HepG2 (cell line): ENCODE measurements at regions of chr20 and their contacts with region 1.

Region 1: DNA sequence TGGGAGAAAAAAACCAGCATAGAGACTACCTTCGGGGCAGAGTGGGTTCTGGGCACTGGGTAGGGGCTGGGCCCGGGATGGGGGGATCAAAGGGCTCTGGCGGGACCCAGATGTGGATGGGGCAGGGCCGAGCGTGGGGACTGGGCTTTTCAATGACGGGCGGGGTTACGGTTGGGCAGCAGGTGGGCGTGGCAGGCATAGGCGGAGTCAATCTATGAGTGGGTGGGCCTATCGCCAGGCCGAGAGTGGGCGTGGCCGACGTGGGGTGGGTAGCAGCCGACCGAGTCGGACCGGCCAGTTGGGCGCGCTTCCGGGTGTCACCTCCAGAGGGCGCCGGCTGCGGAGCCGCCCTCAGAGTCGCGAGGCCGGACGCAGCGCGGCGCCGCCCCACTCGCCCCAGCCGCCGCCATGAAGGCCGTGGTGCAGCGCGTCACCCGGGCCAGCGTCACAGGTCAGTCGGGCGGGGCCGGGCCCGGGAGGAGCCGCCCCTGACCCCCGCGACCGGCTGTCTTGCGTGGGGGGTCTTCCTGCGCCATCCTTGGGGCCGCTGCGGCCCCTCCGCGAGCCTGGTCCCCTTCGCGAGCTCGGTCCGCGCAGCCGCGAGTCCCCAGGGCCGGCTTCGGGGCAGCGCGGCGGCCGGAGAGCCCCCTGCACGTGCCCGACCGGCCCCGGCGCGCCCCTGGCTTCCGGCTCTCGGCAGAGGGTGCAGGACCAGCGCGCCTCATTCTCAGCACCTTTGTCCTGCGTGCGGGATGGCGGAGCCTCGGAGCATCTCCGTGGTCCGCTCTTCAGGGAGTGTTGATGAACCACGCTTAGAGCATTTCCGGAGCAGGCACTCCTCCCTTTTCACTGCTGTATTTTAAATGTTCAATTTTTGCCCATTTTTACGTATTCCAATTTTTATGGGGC is at the start of gene DTD1:
- DNase-seq: peak; percentile 84
- ATAC-seq: peak; percentile 90
- H3K4me3 ChIP-seq: peak within 1 kb of the TSS; percentile 67 to 80 (median 80)
- H3K27ac ChIP-seq: peak within 1 kb of the TSS; percentile 36
- H3K4me1 ChIP-seq: peaks cover 50% of the 10 kb centered on the region
- H3K27me3 ChIP-seq: no peaks in the 10 kb centered on the region
- CTCF ChIP-seq: peak; percentile 88
- EP300 ChIP-seq: no peak
- POLR2A ChIP-seq: peak; percentile 62 to 76
- RAD21 ChIP-seq: peak; percentile 88
- total RNA-seq, gene DTD1: 79.3 and 85.5 TPM in 2 replicates

Region 2: DNA sequence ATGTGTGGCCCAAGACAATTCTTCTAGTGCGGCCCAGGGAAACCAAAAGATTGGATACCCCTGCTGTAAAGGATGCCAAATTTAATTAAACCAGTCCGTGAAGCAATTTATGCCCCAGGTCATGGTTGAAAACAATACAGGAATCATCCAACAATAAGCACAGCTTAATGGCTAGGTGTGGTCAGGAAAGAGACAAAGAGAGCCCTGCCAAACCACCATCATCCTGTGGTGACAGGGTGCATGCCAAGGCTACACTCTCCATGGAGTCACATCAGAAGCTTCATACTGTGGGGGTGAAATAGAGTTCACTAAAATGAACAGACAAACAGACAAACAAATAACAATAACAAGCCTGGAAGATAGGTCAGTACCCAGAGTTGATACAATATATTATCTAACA is 183.7 kb before region 1 on chr20:
- CTCF ChIA-PET with region 1: no interaction called
- POLR2A ChIA-PET with region 1: no interaction called
- in situ Hi-C with region 1: no loop called
- intact Hi-C with region 1: no loop called
- DNase-seq: no peak
- ATAC-seq: no peak
- H3K4me3 ChIP-seq: no peak overlapping the region
- H3K27ac ChIP-seq: no peak overlapping the region
- H3K4me1 ChIP-seq: no peaks in the 10 kb centered on the region
- H3K27me3 ChIP-seq: no peaks in the 10 kb centered on the region
- CTCF ChIP-seq: no peak
- EP300 ChIP-seq: no peak
- POLR2A ChIP-seq: no peak
- RAD21 ChIP-seq: no peak

Region 3: GRCh38 chr20:18625907-18626655 is 38.2 kb after region 1 on chr20:
- CTCF ChIA-PET with region 1: no interaction called
- POLR2A ChIA-PET with region 1: no interaction called
- in situ Hi-C with region 1: no loop called
- intact Hi-C with region 1: no loop called
- DNase-seq: no peak
- ATAC-seq: no peak
- H3K4me3 ChIP-seq: no peak overlapping the region
- H3K27ac ChIP-seq: no peak overlapping the region
- H3K4me1 ChIP-seq: no peaks in the 10 kb centered on the region
- H3K27me3 ChIP-seq: no peaks in the 10 kb centered on the region
- CTCF ChIP-seq: no peak
- EP300 ChIP-seq: no peak
- POLR2A ChIP-seq: no peak
- RAD21 ChIP-seq: no peak

Region 4: DNA sequence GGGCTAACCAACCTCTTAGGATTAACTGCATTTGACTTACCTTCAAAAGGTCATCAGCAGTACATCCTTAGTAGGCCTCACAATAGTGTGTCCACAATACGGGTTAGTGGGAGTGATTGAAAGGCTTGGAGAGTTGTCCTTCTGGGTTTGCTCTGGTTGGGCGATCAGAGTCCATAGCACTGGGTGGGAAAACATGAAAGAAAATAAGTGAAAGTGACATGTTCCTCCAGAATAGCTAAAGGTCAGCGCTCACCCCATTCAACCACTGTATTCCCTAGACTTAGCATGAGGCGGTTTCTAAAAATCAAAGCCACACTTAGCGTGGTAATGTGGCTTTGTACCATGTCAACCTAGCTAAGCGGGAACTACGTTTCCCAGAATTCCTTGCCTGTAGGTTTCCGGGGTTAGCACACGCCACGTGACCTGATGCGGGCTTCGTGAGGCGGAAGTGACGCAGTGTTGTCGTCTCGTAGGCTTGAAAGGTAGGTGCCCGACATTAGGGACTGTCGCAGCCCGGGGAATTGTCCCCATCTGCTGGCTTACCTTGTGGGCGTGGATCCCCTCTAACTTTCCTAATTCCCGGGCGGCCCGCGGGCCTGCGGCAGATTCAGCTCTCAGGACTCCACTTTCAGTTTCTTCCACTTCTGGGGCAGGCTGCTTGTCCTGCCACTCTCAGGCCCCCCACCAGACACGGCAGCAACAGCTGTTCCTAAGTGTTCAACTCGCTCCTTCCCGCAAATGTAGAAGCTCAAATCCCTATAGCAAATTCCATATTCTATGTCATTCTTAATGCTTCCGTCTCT is 205.9 kb after region 1 on chr20:
- CTCF ChIA-PET with region 1: no interaction called
- POLR2A ChIA-PET with region 1: no interaction called
- in situ Hi-C with region 1: no loop called
- intact Hi-C with region 1: loop called (anchors 5 kb)
- DNase-seq: peak; percentile 97
- ATAC-seq: peak; percentile 99
- H3K4me3 ChIP-seq: peak overlapping the region; percentile 76 to 78 (median 76)
- H3K27ac ChIP-seq: peak overlapping the region; percentile 44
- H3K4me1 ChIP-seq: peaks cover 16% of the 10 kb centered on the region
- H3K27me3 ChIP-seq: no peaks in the 10 kb centered on the region; a peak in 1 of 5 replicates
- CTCF ChIP-seq: peak; percentile 73
- EP300 ChIP-seq: no peak
- POLR2A ChIP-seq: peak; percentile 89 to 95
- RAD21 ChIP-seq: peak; percentile 77